Left colon (tissue), 2 donors: ENCODE measurements at regions of chr12 and their contacts with region 1.

Region 1: DNA sequence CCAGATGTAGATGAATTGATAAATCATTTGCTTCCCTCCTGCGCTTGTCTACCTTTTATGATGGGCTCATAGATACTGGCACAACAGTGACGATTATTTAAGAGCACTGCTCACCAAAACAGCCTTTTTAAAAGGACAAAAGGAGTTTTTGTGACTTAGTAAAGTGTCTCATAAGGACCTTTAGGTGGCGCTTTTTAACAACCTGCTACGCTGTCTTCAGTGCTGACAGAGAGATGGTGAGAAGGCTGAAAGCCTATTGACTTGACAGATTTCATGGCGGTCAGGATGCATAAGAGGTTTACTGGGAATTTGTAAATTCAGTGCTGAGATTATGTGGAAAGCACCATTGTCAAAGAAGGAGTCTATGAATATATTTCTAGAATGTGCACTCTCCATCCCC is 87.6 kb downstream of the SLC15A5 start:
- DNase-seq: no peak
- ATAC-seq: peak; percentile 95

Region 2: DNA sequence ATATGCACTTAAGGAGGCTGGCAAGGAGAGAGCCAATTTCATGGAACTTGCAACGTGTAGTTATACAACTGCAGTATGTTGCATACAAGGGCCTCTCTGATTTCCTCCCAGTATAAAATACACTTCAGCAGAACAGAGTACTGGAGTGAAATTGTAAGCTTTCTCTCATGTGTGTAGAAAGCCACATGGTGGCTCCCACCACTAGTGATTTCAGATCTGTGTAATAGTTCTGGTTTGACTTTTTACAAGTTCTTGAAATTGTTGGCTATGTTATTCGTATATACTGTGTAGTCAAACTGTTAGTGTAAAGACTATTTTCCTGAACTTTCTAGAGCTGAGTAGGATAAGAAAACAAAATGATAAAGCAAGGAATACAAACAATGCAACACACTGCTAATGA is 432.5 kb after region 1 on chr12:
- intact Hi-C with region 1: loop called in 1 of 2 experiments (anchors 10 kb)
- DNase-seq: no peak
- ATAC-seq: no peak

Region 3: GRCh38 chr12:16920451-16920850 is 730.6 kb after region 1 on chr12:
- intact Hi-C with region 1: no loop called
- DNase-seq: no peak
- ATAC-seq: no peak